CD14-positive monocyte (primary cell): ENCODE measurements at regions of chr2 and their contacts with region 1.

Region 1: DNA sequence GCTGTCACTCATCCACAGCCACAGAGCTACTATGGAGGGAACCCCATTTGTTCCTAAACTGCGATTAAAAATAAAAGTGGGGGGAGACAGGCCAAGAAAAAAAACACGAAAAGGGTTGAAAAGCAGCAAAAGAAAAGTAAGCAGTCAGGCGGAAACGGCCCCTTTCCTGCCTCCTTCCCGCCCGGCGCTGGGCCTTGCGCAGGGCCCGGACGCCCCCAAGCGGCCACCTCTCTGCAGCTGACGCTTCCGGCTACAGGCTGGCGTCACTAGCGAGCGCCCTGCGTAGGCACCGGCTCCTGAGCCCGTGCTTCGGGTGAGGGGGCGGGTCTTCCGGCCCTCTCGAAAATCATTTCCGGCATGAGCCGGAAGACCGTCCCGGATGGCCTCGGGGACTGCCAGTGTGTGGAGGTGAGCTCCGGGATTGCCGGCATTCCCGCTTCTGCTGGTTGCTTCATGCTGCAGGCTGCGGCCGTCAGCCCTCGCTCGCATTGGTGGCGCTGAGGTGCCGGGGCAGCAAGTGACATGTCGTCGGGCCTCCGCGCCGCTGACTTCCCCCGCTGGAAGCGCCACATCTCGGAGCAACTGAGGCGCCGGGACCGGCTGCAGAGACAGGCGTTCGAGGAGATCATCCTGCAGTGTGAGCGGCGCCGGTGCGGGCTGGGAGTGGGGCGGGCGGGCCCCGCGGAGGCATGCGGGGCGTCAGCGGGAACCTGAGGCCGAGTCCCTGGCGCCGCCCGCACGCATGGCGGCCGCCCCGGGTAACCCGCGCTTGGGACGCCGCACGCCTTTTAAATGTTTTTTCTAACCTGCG is at the start of gene ATG16L1:
- DNase-seq: peak; percentile 93 to 96 (median 96)
- H3K4me3 ChIP-seq: peak within 1 kb of the TSS; percentile 87 to 98 (median 96)
- H3K4me3 Mint-ChIP-seq: peak within 1 kb of the TSS; percentile 88 to 94
- H3K27ac ChIP-seq: peak within 1 kb of the TSS; percentile 58 to 89
- H3K27ac Mint-ChIP-seq: peak within 1 kb of the TSS; percentile 85 to 94 (median 92)
- H3K4me1 ChIP-seq: peaks cover 58 to 59% of the 10 kb centered on the region in 2 donors
- H3K4me1 Mint-ChIP-seq: peaks cover 52% of the 10 kb centered on the region
- H3K27me3 ChIP-seq: no peaks in the 10 kb centered on the region
- H3K27me3 Mint-ChIP-seq: no peaks in the 10 kb centered on the region
- CTCF ChIP-seq: peak; percentile 96
- polyA plus RNA-seq, gene ATG16L1: 3.3 to 22.9 (median 4.3) TPM

Region 2: GRCh38 chr2:232838406-232838874 is 413.1 kb before region 1 on chr2:
- intact Hi-C with region 1: loop called in 1 of 2 experiments (anchors 10 kb)
- DNase-seq: peak; percentile 14 to 47 (median 28)
- H3K4me3 ChIP-seq: peak overlapping the region in 1 of 3 experiments; percentile 53
- H3K4me3 Mint-ChIP-seq: peak overlapping the region in 1 of 2 donors; percentile 78
- H3K27ac ChIP-seq: peak overlapping the region in 1 of 2 donors; percentile 26
- H3K27ac Mint-ChIP-seq: peak overlapping the region; percentile 25 to 83 (median 74)
- H3K4me1 ChIP-seq: peaks cover 31 to 36% of the 10 kb centered on the region in 2 donors
- H3K4me1 Mint-ChIP-seq: peaks cover 41% of the 10 kb centered on the region
- H3K27me3 ChIP-seq: no peaks in the 10 kb centered on the region
- H3K27me3 Mint-ChIP-seq: no peaks in the 10 kb centered on the region
- CTCF ChIP-seq: no peak

Region 3: GRCh38 chr2:232854082-232854481 is 397.4 kb before region 1 on chr2:
- intact Hi-C with region 1: loop called in 1 of 2 experiments (anchors 10 kb)
- DNase-seq: no peak
- H3K4me3 ChIP-seq: no peak overlapping the region
- H3K4me3 Mint-ChIP-seq: no peak overlapping the region
- H3K27ac ChIP-seq: no peak overlapping the region
- H3K27ac Mint-ChIP-seq: no peak overlapping the region
- H3K4me1 ChIP-seq: no peaks in the 10 kb centered on the region
- H3K4me1 Mint-ChIP-seq: no peaks in the 10 kb centered on the region
- H3K27me3 ChIP-seq: no peaks in the 10 kb centered on the region
- H3K27me3 Mint-ChIP-seq: peaks cover 0 to 1% (median 0%) of the 10 kb centered on the region in 3 donors
- CTCF ChIP-seq: no peak

Region 4: GRCh38 chr2:233098615-233099014 is 152.9 kb before region 1 on chr2:
- intact Hi-C with region 1: loop called in 1 of 2 experiments (anchors 10 kb)
- DNase-seq: no peak
- H3K4me3 ChIP-seq: no peak overlapping the region
- H3K4me3 Mint-ChIP-seq: no peak overlapping the region
- H3K27ac ChIP-seq: peak overlapping the region in 1 of 2 donors; percentile 48
- H3K27ac Mint-ChIP-seq: peak overlapping the region in 5 of 7 donors; percentile 66 to 79 (median 69)
- H3K4me1 ChIP-seq: peaks cover 17 to 19% of the 10 kb centered on the region in 2 donors
- H3K4me1 Mint-ChIP-seq: peaks cover 49% of the 10 kb centered on the region
- H3K27me3 ChIP-seq: no peaks in the 10 kb centered on the region
- H3K27me3 Mint-ChIP-seq: no peaks in the 10 kb centered on the region
- CTCF ChIP-seq: peak; percentile 51

Region 5: DNA sequence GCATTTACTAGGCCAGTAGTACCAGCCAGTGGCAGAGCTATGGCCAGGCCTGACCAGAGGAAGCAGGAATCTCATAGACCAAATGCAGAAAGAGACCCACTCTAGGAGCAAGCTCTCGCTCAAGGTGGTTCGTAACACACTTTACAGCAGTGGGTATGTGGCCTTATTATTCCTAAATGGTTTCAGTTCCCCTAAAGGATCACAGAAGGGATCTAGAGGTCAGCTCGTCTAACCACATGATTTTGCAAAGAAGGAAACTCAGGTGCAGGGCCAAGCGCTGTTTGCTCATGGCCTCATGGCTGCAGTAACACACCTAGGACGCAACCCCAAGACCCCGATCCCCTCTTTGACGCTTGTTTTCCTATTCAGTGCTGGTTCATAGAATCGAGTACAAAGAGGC is 65.5 kb before region 1 on chr2:
- intact Hi-C with region 1: loop called (anchors 5 kb)
- DNase-seq: peak; percentile 46 to 80 (median 73)
- H3K4me3 ChIP-seq: peak overlapping the region in 1 of 3 experiments; percentile 16
- H3K4me3 Mint-ChIP-seq: peak overlapping the region in 1 of 2 donors; percentile 64
- H3K27ac ChIP-seq: peak overlapping the region; percentile 62 to 63
- H3K27ac Mint-ChIP-seq: peak overlapping the region; percentile 79 to 94 (median 85)
- H3K4me1 ChIP-seq: peaks cover 49 to 61% of the 10 kb centered on the region in 2 donors
- H3K4me1 Mint-ChIP-seq: peaks cover 61% of the 10 kb centered on the region
- H3K27me3 ChIP-seq: no peaks in the 10 kb centered on the region
- H3K27me3 Mint-ChIP-seq: peaks cover 0 to 3% (median 1%) of the 10 kb centered on the region in 3 donors
- CTCF ChIP-seq: no peak

Region 6: GRCh38 chr2:233193738-233194137 is 57.8 kb before region 1 on chr2:
- intact Hi-C with region 1: loop called (anchors 5 kb)
- DNase-seq: no peak
- H3K4me3 ChIP-seq: no peak overlapping the region
- H3K4me3 Mint-ChIP-seq: no peak overlapping the region
- H3K27ac ChIP-seq: no peak overlapping the region
- H3K27ac Mint-ChIP-seq: peak overlapping the region in 2 of 7 donors; percentile 37 to 47
- H3K4me1 ChIP-seq: peaks cover 18 to 31% of the 10 kb centered on the region in 2 donors
- H3K4me1 Mint-ChIP-seq: peaks cover 24% of the 10 kb centered on the region
- H3K27me3 ChIP-seq: no peaks in the 10 kb centered on the region
- H3K27me3 Mint-ChIP-seq: peaks cover 0 to 7% (median 1%) of the 10 kb centered on the region in 3 donors
- CTCF ChIP-seq: no peak

Region 7: DNA sequence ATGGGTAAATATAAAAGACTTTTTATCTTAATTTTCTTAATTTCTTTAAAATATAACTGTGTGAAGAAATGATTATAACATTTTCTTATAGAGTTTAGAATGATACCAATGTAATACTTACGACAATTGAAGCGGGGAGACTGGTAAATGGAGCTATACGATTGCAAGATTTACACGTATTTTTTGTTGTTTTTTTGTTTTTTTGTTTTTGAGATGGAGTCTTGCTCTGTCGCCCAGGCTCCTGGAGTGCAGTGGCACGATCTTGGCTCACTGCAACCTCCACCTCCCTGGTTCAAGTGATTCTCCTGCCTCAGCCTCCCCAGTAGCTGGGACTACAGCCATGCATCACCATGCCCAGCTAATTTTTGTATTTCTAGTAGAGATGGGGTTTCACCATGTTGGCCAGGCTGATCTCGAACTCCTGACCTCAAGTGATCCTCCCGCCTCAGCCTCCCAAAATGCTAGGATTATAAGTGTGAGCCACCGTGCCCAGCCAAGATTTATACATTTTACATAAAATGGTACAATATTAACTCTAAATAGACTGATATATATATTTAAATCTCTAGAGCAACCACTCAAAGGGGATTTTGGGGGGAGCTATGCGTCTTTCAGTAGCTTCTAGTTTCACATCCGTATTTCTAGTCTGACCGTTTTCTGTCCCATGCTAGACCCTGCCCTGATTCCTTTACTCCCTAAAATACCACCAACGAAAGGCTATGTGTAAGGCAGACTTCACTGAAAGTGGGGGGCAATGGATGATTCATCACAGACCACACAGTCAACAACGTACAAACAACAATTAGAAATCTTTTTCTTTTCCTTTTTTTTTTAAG is 28.2 kb before region 1 on chr2:
- intact Hi-C with region 1: no loop called
- DNase-seq: peak; percentile 42 to 71 (median 65)
- H3K4me3 ChIP-seq: no peak overlapping the region
- H3K4me3 Mint-ChIP-seq: no peak overlapping the region
- H3K27ac ChIP-seq: no peak overlapping the region
- H3K27ac Mint-ChIP-seq: no peak overlapping the region
- H3K4me1 ChIP-seq: peaks cover 8 to 9% of the 10 kb centered on the region in 2 donors
- H3K4me1 Mint-ChIP-seq: peaks cover 15% of the 10 kb centered on the region
- H3K27me3 ChIP-seq: no peaks in the 10 kb centered on the region
- H3K27me3 Mint-ChIP-seq: peaks cover 1 to 16% (median 7%) of the 10 kb centered on the region in 3 donors
- CTCF ChIP-seq: no peak

Region 8: DNA sequence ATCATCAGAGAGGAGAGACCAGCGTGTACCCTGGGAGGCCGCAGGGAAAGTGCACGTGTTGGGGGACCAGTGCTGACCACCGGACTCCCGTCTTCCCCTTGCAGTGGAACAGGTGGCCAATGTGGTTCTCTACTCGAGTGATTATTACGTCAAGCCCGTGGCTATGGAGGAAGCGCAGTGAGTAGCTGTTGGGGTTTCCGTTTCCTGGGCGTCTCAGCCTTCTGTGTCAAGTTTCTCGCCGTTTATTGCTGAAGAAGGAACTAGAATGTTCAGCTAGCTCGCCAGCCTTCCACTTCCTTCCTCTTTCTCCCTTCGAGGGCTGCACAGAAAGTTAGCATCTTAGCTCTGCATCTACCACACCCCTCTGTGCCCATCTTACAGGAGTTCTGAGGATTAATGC is 80.0 kb after region 1 on chr2:
- intact Hi-C with region 1: loop called in 1 of 2 experiments (anchors 5 kb)
- DNase-seq: peak; percentile 96 to 100 (median 98)
- H3K4me3 ChIP-seq: peak overlapping the region in 1 of 3 experiments; percentile 49
- H3K4me3 Mint-ChIP-seq: peak overlapping the region; percentile 9 to 62
- H3K27ac ChIP-seq: peak overlapping the region; percentile 85 to 92
- H3K27ac Mint-ChIP-seq: peak overlapping the region; percentile 96 to 99 (median 98)
- H3K4me1 ChIP-seq: peaks cover 62 to 63% of the 10 kb centered on the region in 2 donors
- H3K4me1 Mint-ChIP-seq: peaks cover 62% of the 10 kb centered on the region
- H3K27me3 ChIP-seq: no peaks in the 10 kb centered on the region
- H3K27me3 Mint-ChIP-seq: peaks cover 0 to 4% (median 0%) of the 10 kb centered on the region in 3 donors
- CTCF ChIP-seq: no peak